ENCODE measurements at regions of chr3 and their contacts with region 1.

Region 1: GRCh38 chr3:126160243-126161210 is 19.9 kb downstream of the ALDH1L1 start:
- DNase-seq: no peak
- H3K4me3 ChIP-seq: no peak overlapping the region
- H3K27ac ChIP-seq: no peak overlapping the region
- H3K4me1 ChIP-seq: no peaks in the 10 kb centered on the region
- H3K27me3 ChIP-seq: no peaks in the 10 kb centered on the region
- CTCF ChIP-seq: no peak
- POLR2A ChIP-seq: no peak

Region 2: DNA sequence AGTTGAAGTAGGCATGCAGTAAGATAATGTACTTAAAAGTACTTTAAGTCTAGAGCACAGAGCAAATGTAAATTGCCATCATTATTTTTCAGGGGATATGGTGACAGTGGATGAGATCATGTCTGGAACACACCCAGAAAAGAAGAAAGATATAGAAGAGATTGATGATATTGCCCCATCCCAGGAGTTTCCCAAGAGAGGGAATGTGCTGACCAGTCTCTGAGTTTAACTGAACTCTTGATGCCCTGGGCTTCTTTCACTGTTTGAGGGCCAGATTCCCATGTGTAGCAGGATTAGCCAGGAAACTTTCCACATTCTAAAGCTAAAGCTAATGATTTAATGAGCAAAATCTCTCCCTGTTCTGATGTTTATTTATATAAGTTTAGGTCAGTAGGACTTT is 1797.1 kb before region 1 on chr3:
- intact Hi-C with region 1: loop called (anchors 10 kb)
- DNase-seq: no peak
- H3K4me3 ChIP-seq: no peak overlapping the region
- H3K27ac ChIP-seq: no peak overlapping the region
- H3K4me1 ChIP-seq: no peaks in the 10 kb centered on the region
- H3K27me3 ChIP-seq: no peaks in the 10 kb centered on the region
- CTCF ChIP-seq: no peak
- POLR2A ChIP-seq: no peak

Region 3: DNA sequence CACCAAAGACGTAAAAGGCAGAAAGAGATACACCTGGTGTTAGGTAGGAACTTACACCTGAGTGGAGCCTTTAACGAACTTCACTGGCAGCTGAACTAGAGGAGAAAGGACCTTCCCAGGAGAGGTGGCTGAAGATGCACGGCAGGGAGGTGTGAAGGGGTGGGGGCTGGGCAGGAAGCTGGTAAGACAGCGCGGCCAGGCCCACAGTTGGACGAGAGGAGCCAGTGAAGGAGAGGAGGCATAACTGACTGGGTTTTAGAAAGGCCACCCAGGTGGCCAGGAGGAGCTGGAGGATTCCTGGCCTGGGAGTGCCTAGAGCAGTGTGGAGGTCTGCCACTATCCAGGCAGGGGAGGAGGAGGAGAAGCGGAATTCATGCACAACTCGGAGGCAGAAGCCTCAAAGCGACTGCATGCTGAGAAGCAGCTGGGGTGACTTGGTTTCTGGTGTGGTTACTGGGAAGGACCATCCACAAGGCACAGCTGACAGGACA is 128.5 kb before region 1 on chr3:
- intact Hi-C with region 1: no loop called
- DNase-seq: no peak
- H3K4me3 ChIP-seq: no peak overlapping the region
- H3K27ac ChIP-seq: no peak overlapping the region
- H3K4me1 ChIP-seq: no peaks in the 10 kb centered on the region
- H3K27me3 ChIP-seq: no peaks in the 10 kb centered on the region
- CTCF ChIP-seq: no peak
- POLR2A ChIP-seq: no peak

Region 4: DNA sequence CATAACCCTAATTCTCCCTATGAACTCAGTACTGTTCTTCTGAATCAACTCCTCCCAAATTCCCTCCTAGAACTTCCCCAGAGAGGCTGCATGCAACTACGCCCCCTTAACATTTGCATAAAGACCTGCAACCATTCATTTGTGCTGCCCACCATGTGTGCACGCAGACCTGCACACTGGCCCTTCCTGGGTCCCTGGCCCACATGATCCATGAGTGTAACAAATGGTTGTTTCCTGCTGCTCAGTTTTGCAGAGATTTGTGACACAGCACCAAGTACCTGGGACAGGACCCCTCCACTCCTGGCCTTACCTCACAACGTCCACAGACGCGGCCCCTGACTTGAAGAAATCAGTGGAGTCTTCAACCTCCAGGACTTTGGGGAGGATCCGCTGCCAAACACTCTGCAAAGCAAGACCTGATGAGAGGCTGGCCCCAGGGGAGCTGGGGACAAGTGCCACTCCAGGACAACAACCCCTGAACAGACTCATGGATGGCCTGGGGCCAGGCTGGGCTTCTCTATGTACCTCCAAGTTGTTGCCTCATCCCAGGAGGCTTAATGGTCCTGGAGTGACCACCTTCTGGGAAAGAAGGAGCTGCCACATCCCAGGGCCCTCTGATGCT is 13.9 kb before region 1 on chr3:
- intact Hi-C with region 1: no loop called
- DNase-seq: peak in 1 of 2 donors; percentile 5
- H3K4me3 ChIP-seq: no peak overlapping the region
- H3K27ac ChIP-seq: no peak overlapping the region
- H3K4me1 ChIP-seq: no peaks in the 10 kb centered on the region
- H3K27me3 ChIP-seq: no peaks in the 10 kb centered on the region
- CTCF ChIP-seq: no peak
- POLR2A ChIP-seq: no peak

Region 5: GRCh38 chr3:126259411-126260391 is 99.2 kb after region 1 on chr3:
- intact Hi-C with region 1: no loop called
- DNase-seq: no peak
- H3K4me3 ChIP-seq: no peak overlapping the region
- H3K27ac ChIP-seq: no peak overlapping the region
- H3K4me1 ChIP-seq: no peaks in the 10 kb centered on the region
- H3K27me3 ChIP-seq: no peaks in the 10 kb centered on the region
- CTCF ChIP-seq: peak in 2 of 3 donors; percentile 46 to 56
- POLR2A ChIP-seq: no peak